Activated naive CD4-positive, alpha-beta T cell treated with anti-CD3 and anti-CD28 coated beads for 36 hours (primary cell): ENCODE measurements at regions of chr12 and their contacts with region 1.

Region 1: GRCh38 chr12:22334410-22335290 is at the start of gene ST8SIA1:
- DNase-seq: peak; percentile 54
- H3K4me3 Mint-ChIP-seq: peak within 1 kb of the TSS; percentile 87
- H3K27ac Mint-ChIP-seq: peak within 1 kb of the TSS; percentile 33
- H3K4me1 Mint-ChIP-seq: peaks cover 14% of the 10 kb centered on the region
- H3K27me3 Mint-ChIP-seq: peaks cover 23% of the 10 kb centered on the region
- total RNA-seq, gene ST8SIA1: 0.84 to 1.7 TPM

Region 2: DNA sequence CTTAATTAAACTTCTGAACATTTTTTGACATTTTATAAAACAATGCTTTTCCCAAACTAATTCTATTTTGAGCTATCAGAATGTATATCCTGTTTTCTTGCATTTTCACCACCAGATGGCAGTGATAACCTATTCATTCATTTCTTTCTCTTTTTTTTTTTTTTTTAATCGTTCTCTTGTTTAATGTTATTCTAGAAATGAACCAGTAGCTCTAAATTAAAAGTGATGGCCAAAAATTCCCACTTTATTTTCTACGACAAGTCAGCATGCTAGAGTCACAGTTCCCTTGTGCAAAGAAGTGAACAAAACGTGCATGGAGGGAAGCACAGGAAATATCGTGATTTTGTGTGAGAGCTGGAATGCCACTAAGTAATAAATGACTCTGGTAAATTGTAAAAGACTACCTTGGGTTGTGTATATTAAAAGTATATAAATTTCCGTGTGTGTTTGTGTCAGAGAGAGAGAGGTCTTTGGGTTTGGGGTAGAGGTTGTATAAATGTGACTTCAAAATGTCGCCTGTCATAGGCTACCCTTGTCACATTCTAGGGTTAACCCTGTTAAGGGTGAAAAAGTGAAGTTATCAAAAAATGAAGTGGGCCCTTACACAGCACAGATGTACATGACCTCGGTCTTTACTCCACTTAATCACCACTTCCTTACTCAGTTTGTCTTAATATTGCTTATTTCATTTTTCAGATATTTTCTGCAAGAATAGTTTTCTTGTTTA is 636.6 kb before region 1 on chr12:
- CTCF ChIA-PET with region 1: no interaction called
- intact Hi-C with region 1: loop called (anchors 2 kb)
- DNase-seq: no peak
- H3K4me3 Mint-ChIP-seq: no peak overlapping the region
- H3K27ac Mint-ChIP-seq: no peak overlapping the region
- H3K4me1 Mint-ChIP-seq: peaks cover 11% of the 10 kb centered on the region
- H3K27me3 Mint-ChIP-seq: no peaks in the 10 kb centered on the region

Region 3: DNA sequence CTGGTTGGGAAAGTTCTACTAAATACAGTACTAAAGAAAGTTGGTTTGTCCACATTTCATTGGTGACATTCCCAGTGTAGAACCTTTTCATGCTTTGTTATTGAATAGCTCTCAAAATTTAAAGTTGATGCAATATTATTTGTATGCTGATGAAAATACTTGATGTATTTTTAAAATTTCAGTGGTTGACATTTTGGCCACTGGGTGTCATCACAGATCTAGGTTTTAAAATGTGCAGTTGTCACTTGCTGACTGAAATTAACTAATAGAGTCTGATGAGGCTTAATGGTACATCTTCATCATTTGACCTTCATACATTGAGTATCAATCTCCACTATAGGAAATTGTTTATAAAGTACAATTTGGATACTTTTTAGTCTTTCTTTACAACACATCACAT is 251.5 kb before region 1 on chr12:
- CTCF ChIA-PET with region 1: interaction called, 6 read pairs
- intact Hi-C with region 1: loop called (anchors 1 kb)
- DNase-seq: peak; percentile 43
- H3K4me3 Mint-ChIP-seq: no peak overlapping the region
- H3K27ac Mint-ChIP-seq: no peak overlapping the region
- H3K4me1 Mint-ChIP-seq: no peaks in the 10 kb centered on the region
- H3K27me3 Mint-ChIP-seq: no peaks in the 10 kb centered on the region

Region 4: DNA sequence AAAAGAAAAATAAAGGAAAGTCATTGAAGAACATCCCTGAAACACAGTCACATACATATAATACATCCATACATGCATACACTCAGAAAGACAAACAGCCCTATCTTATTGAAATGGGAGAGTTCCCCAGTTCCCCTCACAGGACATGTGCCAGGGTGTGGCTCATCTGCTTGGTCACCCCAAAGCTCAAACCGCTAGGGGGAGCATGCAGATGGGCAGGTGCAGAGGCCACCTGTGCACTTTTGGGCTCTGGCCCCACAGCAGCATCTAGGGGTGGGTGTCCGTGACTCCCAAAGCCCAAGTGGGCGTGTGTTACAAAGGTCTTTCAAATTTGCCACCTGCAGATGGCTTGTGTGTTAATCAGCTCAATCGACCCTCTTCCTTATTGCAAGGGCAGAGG is 213.4 kb before region 1 on chr12:
- CTCF ChIA-PET with region 1: interaction called, 7 read pairs
- intact Hi-C with region 1: loop called (anchors 1 kb)
- DNase-seq: peak; percentile 51
- H3K4me3 Mint-ChIP-seq: no peak overlapping the region
- H3K27ac Mint-ChIP-seq: no peak overlapping the region
- H3K4me1 Mint-ChIP-seq: peaks cover 4% of the 10 kb centered on the region
- H3K27me3 Mint-ChIP-seq: no peaks in the 10 kb centered on the region

Region 5: DNA sequence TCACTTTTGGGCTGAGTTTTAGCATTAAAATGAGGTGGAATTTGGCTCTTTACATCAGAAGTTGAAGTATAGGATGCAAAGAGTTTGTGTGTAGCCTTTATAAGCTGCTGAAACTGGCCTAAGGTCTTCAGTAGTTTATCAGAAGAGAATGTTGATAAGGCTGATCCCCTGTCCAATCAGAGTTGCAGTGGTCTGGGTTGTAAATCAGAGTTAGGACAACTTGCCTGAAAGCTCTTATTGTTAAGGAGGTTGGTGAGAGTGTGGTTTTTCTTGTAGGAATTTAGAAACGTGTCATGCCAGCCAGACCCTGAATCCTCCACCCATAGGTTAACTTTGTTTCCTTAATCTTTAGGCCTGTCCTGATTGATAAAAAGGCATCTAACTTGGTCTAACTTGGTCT is 143.7 kb before region 1 on chr12:
- CTCF ChIA-PET with region 1: interaction called, 3 read pairs
- intact Hi-C with region 1: loop called (anchors 5 kb)
- DNase-seq: no peak
- H3K4me3 Mint-ChIP-seq: no peak overlapping the region
- H3K27ac Mint-ChIP-seq: no peak overlapping the region
- H3K4me1 Mint-ChIP-seq: no peaks in the 10 kb centered on the region
- H3K27me3 Mint-ChIP-seq: no peaks in the 10 kb centered on the region

Region 6: DNA sequence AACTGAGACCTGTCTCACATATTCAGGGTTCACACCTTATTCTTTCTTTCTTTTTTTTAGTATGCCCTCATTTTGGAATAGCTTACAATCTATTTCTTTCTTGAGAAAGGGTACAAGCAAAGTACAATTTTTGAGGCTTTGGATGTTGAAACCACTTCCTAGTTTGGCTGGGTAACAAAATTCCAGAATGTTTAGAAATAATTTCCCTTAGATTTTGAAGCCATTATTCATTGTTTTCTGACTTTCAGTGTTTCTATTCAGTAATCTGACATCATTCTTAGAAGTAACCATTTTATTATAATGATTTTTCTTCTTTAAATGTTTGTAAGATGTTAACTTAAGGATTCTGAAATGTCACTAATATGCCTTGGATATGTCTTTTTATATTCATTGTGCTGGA is 28.3 kb before region 1 on chr12:
- CTCF ChIA-PET with region 1: no interaction called
- intact Hi-C with region 1: no loop called
- DNase-seq: no peak
- H3K4me3 Mint-ChIP-seq: no peak overlapping the region
- H3K27ac Mint-ChIP-seq: no peak overlapping the region
- H3K4me1 Mint-ChIP-seq: no peaks in the 10 kb centered on the region
- H3K27me3 Mint-ChIP-seq: peaks cover 2% of the 10 kb centered on the region

Region 7: DNA sequence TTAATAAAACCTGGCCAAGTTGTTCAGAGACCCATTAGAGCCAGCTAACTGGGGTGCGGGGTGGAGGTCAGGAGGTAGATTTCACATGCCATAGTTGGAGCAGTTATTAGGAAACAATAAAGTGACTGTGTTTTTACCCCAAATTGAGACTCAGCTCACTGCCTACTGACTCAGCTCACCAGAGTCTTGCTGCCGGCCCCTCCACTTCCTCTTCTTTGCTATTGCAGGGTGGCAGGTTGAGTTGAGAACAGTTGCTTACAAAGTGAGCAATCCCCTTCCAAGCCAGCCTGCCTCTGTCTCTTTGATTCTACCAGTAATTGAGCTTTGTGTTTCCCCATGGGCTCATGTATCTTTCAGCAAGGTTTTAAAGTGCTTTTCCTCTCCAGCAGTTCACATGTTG is 13.0 kb before region 1 on chr12:
- CTCF ChIA-PET with region 1: interaction called, 9 read pairs
- intact Hi-C with region 1: loop called (anchors 1 kb)
- DNase-seq: peak; percentile 62
- H3K4me3 Mint-ChIP-seq: no peak overlapping the region
- H3K27ac Mint-ChIP-seq: no peak overlapping the region
- H3K4me1 Mint-ChIP-seq: peaks cover 13% of the 10 kb centered on the region
- H3K27me3 Mint-ChIP-seq: no peaks in the 10 kb centered on the region

Region 8: DNA sequence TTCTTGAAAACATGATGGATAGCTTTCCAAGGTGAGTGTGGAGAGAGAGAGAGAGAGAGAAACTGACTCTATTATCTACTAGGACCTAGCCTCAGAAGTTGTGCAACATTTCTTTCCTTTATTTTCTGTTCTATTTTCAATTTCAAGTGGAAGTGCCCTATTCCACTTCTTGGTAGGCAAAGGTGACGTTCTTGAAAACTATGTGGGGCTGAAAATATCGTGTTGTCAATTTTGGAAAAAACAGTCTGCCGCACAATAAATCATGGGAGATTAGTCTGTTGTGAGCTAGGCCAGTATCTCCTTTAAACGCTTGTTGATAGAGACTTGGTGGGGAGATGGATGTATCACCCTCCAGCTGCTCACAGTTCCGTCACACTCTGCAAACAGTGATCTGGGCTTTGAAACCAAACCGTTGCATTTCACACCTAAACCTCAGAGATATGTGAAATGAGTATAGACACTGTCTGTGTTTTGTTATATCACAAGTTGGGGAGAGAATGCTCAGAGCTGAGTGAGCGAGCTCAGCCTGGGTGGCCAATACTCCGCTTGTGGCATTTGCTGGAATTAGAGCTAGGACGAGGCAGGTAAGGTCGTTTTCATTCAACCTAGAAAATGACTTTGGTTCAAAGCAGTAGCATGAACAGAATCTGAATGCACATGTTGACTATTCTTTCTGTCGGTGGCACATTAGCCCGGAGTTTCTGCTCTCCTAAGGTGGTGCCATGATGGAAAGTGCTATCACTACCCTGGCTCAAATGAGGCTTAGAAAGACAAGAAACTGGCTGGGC is 74.9 kb after region 1 on chr12:
- CTCF ChIA-PET with region 1: no interaction called
- intact Hi-C with region 1: loop called (anchors 1 kb)
- DNase-seq: peak; percentile 51
- H3K4me3 Mint-ChIP-seq: no peak overlapping the region
- H3K27ac Mint-ChIP-seq: no peak overlapping the region
- H3K4me1 Mint-ChIP-seq: peaks cover 15% of the 10 kb centered on the region
- H3K27me3 Mint-ChIP-seq: no peaks in the 10 kb centered on the region

Region 9: GRCh38 chr12:22491034-22491433 is 156.4 kb after region 1 on chr12:
- CTCF ChIA-PET with region 1: no interaction called
- intact Hi-C with region 1: no loop called
- DNase-seq: no peak
- H3K4me3 Mint-ChIP-seq: no peak overlapping the region
- H3K27ac Mint-ChIP-seq: no peak overlapping the region
- H3K4me1 Mint-ChIP-seq: no peaks in the 10 kb centered on the region
- H3K27me3 Mint-ChIP-seq: no peaks in the 10 kb centered on the region

Region 10: GRCh38 chr12:22505826-22506225 is 171.2 kb after region 1 on chr12:
- CTCF ChIA-PET with region 1: no interaction called
- intact Hi-C with region 1: no loop called
- DNase-seq: no peak
- H3K4me3 Mint-ChIP-seq: no peak overlapping the region
- H3K27ac Mint-ChIP-seq: no peak overlapping the region
- H3K4me1 Mint-ChIP-seq: no peaks in the 10 kb centered on the region
- H3K27me3 Mint-ChIP-seq: no peaks in the 10 kb centered on the region